HepG2 (cell line): ENCODE measurements at regions of chr13 and their contacts with region 1.

Region 1: GRCh38 chr13:93066187-93066586 is 160.4 kb upstream of the GPC6 start:
- DNase-seq: no peak
- ATAC-seq: no peak
- H3K4me3 ChIP-seq: no peak overlapping the region
- H3K27ac ChIP-seq: no peak overlapping the region
- H3K4me1 ChIP-seq: no peaks in the 10 kb centered on the region
- H3K27me3 ChIP-seq: no peaks in the 10 kb centered on the region
- CTCF ChIP-seq: no peak
- EP300 ChIP-seq: no peak
- POLR2A ChIP-seq: no peak
- RAD21 ChIP-seq: no peak

Region 2: GRCh38 chr13:93098972-93099371 is 32.8 kb after region 1 on chr13:
- CTCF ChIA-PET with region 1: no interaction called
- POLR2A ChIA-PET with region 1: no interaction called
- in situ Hi-C with region 1: no loop called
- intact Hi-C with region 1: loop called (anchors 1 kb)
- DNase-seq: no peak
- ATAC-seq: no peak
- H3K4me3 ChIP-seq: no peak overlapping the region
- H3K27ac ChIP-seq: no peak overlapping the region
- H3K4me1 ChIP-seq: no peaks in the 10 kb centered on the region
- H3K27me3 ChIP-seq: no peaks in the 10 kb centered on the region
- CTCF ChIP-seq: no peak
- EP300 ChIP-seq: no peak
- POLR2A ChIP-seq: no peak
- RAD21 ChIP-seq: no peak